GM10248 (cell line): ENCODE measurements at regions of chr5 and their contacts with region 1.

Region 1: GRCh38 chr5:138641547-138642298 is 66.5 kb upstream of the HSPA9 start:
- DNase-seq: peak; percentile 71
- CTCF ChIP-seq: peak; percentile 72

Region 2: DNA sequence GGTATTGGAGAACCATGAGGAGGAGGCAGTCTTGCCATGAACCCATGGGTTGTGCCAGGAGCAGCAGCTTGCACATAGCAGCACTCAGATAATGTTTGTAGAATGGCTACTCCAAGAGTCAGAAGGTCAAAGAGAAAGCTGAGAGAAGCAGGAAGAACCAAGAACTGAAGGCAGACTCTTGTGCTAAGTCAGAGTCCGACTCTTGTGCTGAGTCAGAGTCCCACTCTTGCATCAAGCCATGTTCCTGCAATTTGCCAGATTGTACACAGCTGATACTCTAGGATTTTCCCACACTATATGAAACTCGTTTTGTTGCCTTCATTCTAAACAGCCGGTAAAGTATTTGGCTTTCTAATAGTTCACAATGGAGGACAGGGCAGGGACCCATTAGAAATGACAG is 40.3 kb before region 1 on chr5:
- CTCF ChIA-PET with region 1: interaction called, 22 read pairs
- POLR2A ChIA-PET with region 1: no interaction called
- DNase-seq: no peak
- CTCF ChIP-seq: no peak

Region 3: GRCh38 chr5:138654281-138654867 is 12.7 kb after region 1 on chr5:
- CTCF ChIA-PET with region 1: interaction called, 60 read pairs
- POLR2A ChIA-PET with region 1: no interaction called
- DNase-seq: peak; percentile 64
- CTCF ChIP-seq: no peak

Region 4: GRCh38 chr5:139262742-139263445 is 621.2 kb after region 1 on chr5:
- CTCF ChIA-PET with region 1: interaction called, 15 read pairs
- POLR2A ChIA-PET with region 1: no interaction called
- DNase-seq: peak; percentile 79
- CTCF ChIP-seq: peak; percentile 91